Posterior vena cava (tissue), 2 donors: ENCODE measurements at regions of chrX and their contacts with region 1.

Region 1: GRCh38 chrX:12390301-12390700 is 252.0 kb downstream of the FRMPD4 start:
- DNase-seq: no peak

Region 2: GRCh38 chrX:12411831-12412230 is 21.5 kb after region 1 on chrX:
- intact Hi-C with region 1: loop called in 1 of 2 experiments (anchors 1 kb)
- DNase-seq: no peak